Cardiac septum (tissue), 1 donor: ENCODE measurements at regions of chr3 and their contacts with region 1.

Region 1: GRCh38 chr3:44529927-44530326 is 25.1 kb upstream of the ZKSCAN7 start:
- DNase-seq: no peak

Region 2: GRCh38 chr3:44477312-44478030 is 52.5 kb before region 1 on chr3 and contains the start of gene ZNF445:
- intact Hi-C with region 1: no loop called
- DNase-seq: peak; percentile 94
- total RNA-seq, gene ZNF445: 16.7 TPM

Region 3: DNA sequence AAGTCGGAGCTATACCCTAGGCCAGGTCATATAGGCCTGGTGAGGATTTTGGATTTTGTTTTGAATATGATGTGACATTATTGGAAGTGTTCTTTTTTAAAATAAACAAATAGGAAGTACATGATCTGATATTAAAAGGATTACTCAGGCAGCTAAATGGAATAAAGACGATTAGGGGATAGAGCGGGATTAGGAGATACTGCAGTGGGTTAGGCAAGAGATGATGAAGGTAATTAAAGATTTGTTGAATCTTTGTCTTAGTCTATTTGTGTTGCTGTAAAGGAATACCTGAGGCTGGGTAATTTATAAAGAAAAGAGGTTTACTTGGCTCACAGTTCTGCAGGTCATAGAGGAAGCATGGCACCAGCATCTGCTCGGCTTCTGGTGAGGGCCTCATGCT is 253.0 kb after region 1 on chr3:
- intact Hi-C with region 1: no loop called
- DNase-seq: no peak

Region 4: DNA sequence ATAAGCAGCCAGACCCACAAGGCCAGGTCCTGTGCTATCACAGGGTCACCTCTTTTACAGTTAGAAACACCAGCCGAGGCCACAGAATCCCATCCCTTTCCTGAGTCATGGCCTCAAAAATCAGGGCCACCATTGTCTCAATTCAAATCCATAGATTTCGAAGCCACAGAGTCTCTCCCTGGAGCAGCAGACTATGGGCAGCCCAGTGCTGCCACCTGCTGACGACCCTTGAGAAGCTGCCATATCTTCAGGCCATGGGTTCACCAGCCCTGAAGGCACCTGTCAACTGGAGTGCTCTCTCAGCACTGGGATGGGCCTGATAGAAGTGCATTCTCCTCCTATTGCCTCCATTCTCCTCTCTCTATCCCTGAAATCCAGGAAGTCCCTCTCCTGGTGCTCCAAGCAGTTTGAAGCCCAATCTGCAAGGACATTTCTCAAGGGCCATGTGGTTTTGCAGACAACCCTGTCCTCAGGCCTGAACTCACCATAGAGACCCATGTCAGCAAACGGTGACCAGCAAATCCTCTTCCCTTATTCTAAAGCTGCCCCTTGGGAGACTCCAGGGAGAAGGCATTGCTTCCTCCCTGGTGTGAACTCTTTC is 384.0 kb after region 1 on chr3:
- intact Hi-C with region 1: loop called (anchors 2 kb)
- DNase-seq: peak; percentile 79